ENCODE measurements at regions of chr11 and their contacts with region 1.

Region 1: GRCh38 chr11:17504330-17505107 is 27.9 kb upstream of the ABCC8 start:
- ATAC-seq: peak; percentile 66 to 90 (median 80)
- H3K4me3 ChIP-seq: no peak overlapping the region
- H3K27ac ChIP-seq: no peak overlapping the region
- H3K4me1 ChIP-seq: peaks cover 9 to 10% of the 10 kb centered on the region in 2 donors

Region 2: GRCh38 chr11:17230867-17231851 is 273.4 kb before region 1 on chr11:
- in situ Hi-C with region 1: loop called in 3 of 9 experiments (anchors 25 kb)
- ATAC-seq: peak in 2 of 8 experiments; percentile 86 to 90
- H3K4me3 ChIP-seq: no peak overlapping the region
- H3K27ac ChIP-seq: no peak overlapping the region
- H3K4me1 ChIP-seq: no peaks in the 10 kb centered on the region

Region 3: DNA sequence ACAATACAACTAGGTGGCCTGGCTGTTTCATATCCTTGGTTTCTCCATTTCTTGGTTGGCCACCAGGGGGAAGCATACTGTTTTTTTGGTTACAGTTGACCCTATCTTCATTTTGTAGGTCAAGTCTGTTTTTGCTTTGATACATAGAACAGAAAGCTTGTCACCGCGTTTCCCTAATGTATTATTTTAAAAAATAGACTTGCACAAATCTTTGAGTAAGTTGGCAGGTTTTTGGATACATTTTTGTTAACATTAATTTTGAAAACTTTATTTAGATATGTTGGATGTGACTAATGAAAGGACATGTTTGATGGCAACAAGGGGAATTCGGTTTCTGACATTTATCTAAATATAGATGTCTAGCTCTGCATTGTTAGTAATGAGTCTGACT is 149.9 kb before region 1 on chr11:
- in situ Hi-C with region 1: loop called in 1 of 9 experiments (anchors 25 kb)
- ATAC-seq: no peak
- H3K4me3 ChIP-seq: peak overlapping the region; percentile 57 to 83 (median 62)
- H3K27ac ChIP-seq: no peak overlapping the region
- H3K4me1 ChIP-seq: peaks cover 2 to 4% of the 10 kb centered on the region in 2 donors

Region 4: GRCh38 chr11:17384002-17384511 is 120.5 kb before region 1 on chr11:
- in situ Hi-C with region 1: loop called in 8 of 9 experiments (anchors 10 to 25 kb)
- ATAC-seq: peak; percentile 38 to 69 (median 56)
- H3K4me3 ChIP-seq: no peak overlapping the region
- H3K27ac ChIP-seq: no peak overlapping the region
- H3K4me1 ChIP-seq: no peaks in the 10 kb centered on the region

Region 5: GRCh38 chr11:17598700-17599459 is 94.4 kb after region 1 on chr11:
- in situ Hi-C with region 1: loop called in 1 of 9 experiments (anchors 25 kb)
- ATAC-seq: peak; percentile 86 to 97 (median 95)
- H3K4me3 ChIP-seq: no peak overlapping the region
- H3K27ac ChIP-seq: no peak overlapping the region
- H3K4me1 ChIP-seq: peaks cover 0 to 8% of the 10 kb centered on the region in 2 donors

Region 6: GRCh38 chr11:18419040-18419439 is 914.5 kb after region 1 on chr11:
- in situ Hi-C with region 1: no loop called
- ATAC-seq: no peak
- H3K4me3 ChIP-seq: no peak overlapping the region
- H3K27ac ChIP-seq: no peak overlapping the region
- H3K4me1 ChIP-seq: no peaks in the 10 kb centered on the region